ENCODE measurements at regions of chr1 and their contacts with region 1.

Region 1: GRCh38 chr1:172180501-172181285 is 239.8 kb upstream of the C1orf105 start:
- DNase-seq: peak; percentile 66
- H3K4me3 Mint-ChIP-seq: peak overlapping the region; percentile 74
- H3K27ac Mint-ChIP-seq: peak overlapping the region; percentile 95
- H3K4me1 Mint-ChIP-seq: peaks cover 45% of the 10 kb centered on the region
- H3K27me3 Mint-ChIP-seq: no peaks in the 10 kb centered on the region

Region 2: GRCh38 chr1:172135076-172135672 is 45.5 kb before region 1 on chr1:
- CTCF ChIA-PET with region 1: interaction called, 3 read pairs
- POLR2A ChIA-PET with region 1: no interaction called
- intact Hi-C with region 1: loop called (anchors 1 kb)
- DNase-seq: no peak
- H3K4me3 Mint-ChIP-seq: no peak overlapping the region
- H3K27ac Mint-ChIP-seq: peak overlapping the region; percentile 29
- H3K4me1 Mint-ChIP-seq: peaks cover 18% of the 10 kb centered on the region
- H3K27me3 Mint-ChIP-seq: no peaks in the 10 kb centered on the region

Region 3: DNA sequence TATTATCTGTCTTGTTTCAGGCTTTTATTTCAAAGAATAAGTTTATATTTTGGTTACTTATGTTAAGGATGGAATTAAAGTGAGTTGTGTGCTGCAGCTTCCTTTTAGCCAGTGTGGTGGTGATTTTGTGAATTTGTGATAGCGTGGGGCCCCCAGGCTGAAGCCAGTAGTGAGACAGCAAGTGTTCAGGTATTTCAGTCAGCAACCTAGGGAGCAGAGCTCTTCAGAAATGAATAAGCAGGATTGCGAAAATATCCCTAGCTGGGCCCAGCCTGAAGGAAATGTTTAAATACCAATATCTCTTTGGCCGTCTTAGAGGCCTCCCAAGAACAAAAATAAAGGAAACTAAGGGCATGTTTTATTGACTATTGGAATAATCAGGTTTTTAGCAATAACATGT is 89.0 kb after region 1 on chr1:
- CTCF ChIA-PET with region 1: interaction called, 4 read pairs
- POLR2A ChIA-PET with region 1: no interaction called
- intact Hi-C with region 1: loop called (anchors 2 kb)
- DNase-seq: peak; percentile 41
- H3K4me3 Mint-ChIP-seq: no peak overlapping the region
- H3K27ac Mint-ChIP-seq: peak overlapping the region; percentile 49
- H3K4me1 Mint-ChIP-seq: peaks cover 48% of the 10 kb centered on the region
- H3K27me3 Mint-ChIP-seq: no peaks in the 10 kb centered on the region

Region 4: DNA sequence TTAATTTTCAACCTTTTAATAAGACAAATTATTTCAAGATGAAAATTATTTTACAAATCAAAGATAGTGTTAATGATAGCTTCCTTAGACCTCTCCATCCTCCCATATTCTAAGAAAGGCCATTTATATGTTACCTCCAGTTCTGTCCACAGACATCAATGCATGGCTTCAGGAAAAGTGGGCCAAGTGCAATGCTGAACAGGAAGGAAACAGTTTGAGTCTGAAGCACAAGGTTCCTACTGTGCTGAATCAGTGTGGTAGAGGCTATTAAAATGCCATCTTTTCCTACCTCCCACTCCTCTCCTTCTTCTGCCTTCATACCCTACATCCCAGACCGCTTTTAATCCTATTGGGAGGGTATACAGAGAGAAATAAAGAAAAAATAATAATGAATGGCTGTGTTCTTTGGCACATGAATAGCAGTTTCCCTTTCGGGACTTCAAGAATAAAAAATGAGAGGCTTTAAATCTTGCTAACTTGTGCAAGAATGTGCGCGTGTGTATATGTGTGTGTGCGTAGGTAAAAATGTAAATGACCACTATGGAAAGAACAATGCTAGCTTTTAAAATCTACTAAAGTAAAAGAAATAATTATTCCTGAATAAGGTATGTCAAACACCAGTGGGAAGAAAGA is 177.2 kb after region 1 on chr1:
- CTCF ChIA-PET with region 1: interaction called, 5 read pairs
- POLR2A ChIA-PET with region 1: interaction called, 8 read pairs
- intact Hi-C with region 1: loop called (anchors 1 kb)
- DNase-seq: no peak
- H3K4me3 Mint-ChIP-seq: peak overlapping the region; percentile 11
- H3K27ac Mint-ChIP-seq: peak overlapping the region; percentile 85
- H3K4me1 Mint-ChIP-seq: peaks cover 66% of the 10 kb centered on the region
- H3K27me3 Mint-ChIP-seq: no peaks in the 10 kb centered on the region

Region 5: GRCh38 chr1:172895050-172895460 is 714.4 kb after region 1 on chr1:
- CTCF ChIA-PET with region 1: no interaction called
- POLR2A ChIA-PET with region 1: no interaction called
- intact Hi-C with region 1: no loop called
- DNase-seq: peak; percentile 29
- H3K4me3 Mint-ChIP-seq: peak overlapping the region; percentile 54
- H3K27ac Mint-ChIP-seq: peak overlapping the region; percentile 14
- H3K4me1 Mint-ChIP-seq: peaks cover 38% of the 10 kb centered on the region
- H3K27me3 Mint-ChIP-seq: peaks cover 18% of the 10 kb centered on the region

Measured in activated CD4-positive, alpha-beta memory T cell treated with anti-CD3 and anti-CD28 coated beads for 36 hours (primary cell).